T-cell (primary cell): ENCODE measurements at regions of chr6 and their contacts with region 1.

Region 1: DNA sequence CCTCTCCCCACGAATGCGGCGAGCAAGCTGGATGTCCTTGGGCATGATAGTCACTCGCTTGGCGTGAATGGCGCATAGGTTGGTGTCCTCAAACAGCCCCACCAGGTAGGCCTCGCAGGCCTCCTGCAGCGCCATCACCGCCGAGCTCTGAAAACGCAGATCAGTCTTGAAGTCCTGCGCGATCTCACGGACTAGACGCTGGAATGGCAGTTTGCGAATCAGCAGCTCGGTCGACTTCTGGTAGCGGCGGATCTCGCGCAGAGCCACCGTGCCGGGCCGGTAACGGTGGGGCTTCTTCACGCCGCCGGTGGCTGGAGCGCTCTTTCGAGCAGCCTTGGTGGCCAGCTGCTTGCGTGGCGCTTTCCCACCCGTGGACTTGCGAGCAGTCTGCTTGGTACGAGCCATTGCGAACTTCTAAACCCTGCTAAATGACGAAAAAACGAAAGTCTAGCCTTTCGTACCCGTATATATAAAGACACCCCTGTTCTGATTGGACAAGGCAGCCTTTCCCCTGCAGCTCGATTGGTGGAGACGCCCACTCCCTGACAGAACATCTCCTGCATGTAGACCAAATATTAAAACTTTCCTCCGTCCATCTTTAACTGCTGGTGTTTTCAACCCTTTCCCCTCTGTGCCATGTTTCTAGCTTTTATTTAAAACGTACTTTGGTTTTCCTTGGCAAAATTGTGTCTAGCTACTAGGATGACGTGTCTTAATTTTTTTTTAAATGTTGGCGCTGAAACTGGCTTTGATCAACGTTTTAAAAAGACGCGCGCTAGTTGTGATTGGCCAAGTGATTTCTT is 109.8 kb downstream of the HFE start:
- DNase-seq: peak; percentile 55 to 93 (median 81)
- ATAC-seq: peak; percentile 58 to 66 (median 61)
- H3K4me3 ChIP-seq: peak overlapping the region; percentile 79 to 99
- H3K4me3 Mint-ChIP-seq: peak overlapping the region; percentile 95 to 98 (median 97)
- H3K27ac ChIP-seq: peak overlapping the region; percentile 85
- H3K27ac Mint-ChIP-seq: peak overlapping the region; percentile 93 to 98
- H3K4me1 ChIP-seq: peaks cover 13 to 30% of the 10 kb centered on the region in 2 experiments
- H3K4me1 Mint-ChIP-seq: peaks cover 38 to 60% (median 46%) of the 10 kb centered on the region in 3 donors
- H3K27me3 ChIP-seq: no peaks in the 10 kb centered on the region
- H3K27me3 Mint-ChIP-seq: no peaks in the 10 kb centered on the region

Region 2: GRCh38 chr6:25746968-25747367 is 450.1 kb before region 1 on chr6:
- CTCF ChIA-PET with region 1: no interaction called
- POLR2A ChIA-PET with region 1: no interaction called
- DNase-seq: no peak
- ATAC-seq: no peak
- H3K4me3 ChIP-seq: no peak overlapping the region
- H3K4me3 Mint-ChIP-seq: no peak overlapping the region
- H3K27ac ChIP-seq: no peak overlapping the region
- H3K27ac Mint-ChIP-seq: no peak overlapping the region
- H3K4me1 ChIP-seq: no peaks in the 10 kb centered on the region
- H3K4me1 Mint-ChIP-seq: no peaks in the 10 kb centered on the region
- H3K27me3 ChIP-seq: no peaks in the 10 kb centered on the region
- H3K27me3 Mint-ChIP-seq: peaks cover 0 to 2% of the 10 kb centered on the region in 2 donors

Region 3: DNA sequence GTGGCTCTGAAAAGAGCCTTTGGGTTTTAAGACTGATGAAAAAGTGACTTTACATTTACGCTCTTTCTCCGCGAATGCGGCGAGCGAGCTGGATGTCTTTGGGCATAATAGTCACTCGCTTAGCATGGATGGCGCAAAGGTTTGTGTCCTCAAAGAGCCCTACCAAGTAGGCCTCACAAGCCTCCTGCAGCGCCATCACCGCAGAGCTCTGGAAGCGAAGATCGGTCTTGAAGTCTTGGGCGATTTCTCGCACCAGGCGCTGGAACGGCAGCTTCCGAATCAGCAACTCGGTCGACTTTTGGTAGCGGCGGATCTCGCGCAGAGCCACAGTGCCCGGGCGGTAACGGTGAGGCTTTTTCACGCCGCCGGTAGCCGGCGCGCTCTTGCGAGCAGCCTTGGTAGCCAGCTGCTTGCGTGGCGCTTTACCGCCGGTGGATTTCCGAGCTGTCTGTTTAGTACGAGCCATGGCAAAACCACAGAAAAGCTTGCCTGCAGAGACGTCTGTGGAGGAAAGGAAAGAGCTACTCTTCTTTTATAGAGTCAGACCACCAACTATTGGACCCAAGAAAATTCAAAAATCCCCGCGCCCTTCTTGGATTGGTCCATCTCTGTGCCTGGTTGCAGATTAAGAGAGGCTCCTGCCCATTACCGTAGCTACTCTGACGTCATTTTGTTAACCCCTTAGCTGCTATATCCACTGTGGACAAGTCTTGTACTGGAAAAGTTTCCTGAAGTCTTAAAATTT is 165.3 kb before region 1 on chr6:
- CTCF ChIA-PET with region 1: interaction called in 1 of 2 experiments, 4 read pairs
- POLR2A ChIA-PET with region 1: interaction called in 1 of 2 experiments, 26 read pairs
- DNase-seq: peak; percentile 61 to 95 (median 87)
- ATAC-seq: peak; percentile 68 to 72 (median 70)
- H3K4me3 ChIP-seq: peak overlapping the region; percentile 61 to 84
- H3K4me3 Mint-ChIP-seq: peak overlapping the region; percentile 90 to 95 (median 92)
- H3K27ac ChIP-seq: peak overlapping the region; percentile 74
- H3K27ac Mint-ChIP-seq: peak overlapping the region; percentile 94 to 98
- H3K4me1 ChIP-seq: peaks cover 30 to 32% of the 10 kb centered on the region in 2 experiments
- H3K4me1 Mint-ChIP-seq: peaks cover 48 to 53% (median 50%) of the 10 kb centered on the region in 3 donors
- H3K27me3 ChIP-seq: no peaks in the 10 kb centered on the region
- H3K27me3 Mint-ChIP-seq: peaks cover 0 to 2% of the 10 kb centered on the region in 2 donors

Region 4: DNA sequence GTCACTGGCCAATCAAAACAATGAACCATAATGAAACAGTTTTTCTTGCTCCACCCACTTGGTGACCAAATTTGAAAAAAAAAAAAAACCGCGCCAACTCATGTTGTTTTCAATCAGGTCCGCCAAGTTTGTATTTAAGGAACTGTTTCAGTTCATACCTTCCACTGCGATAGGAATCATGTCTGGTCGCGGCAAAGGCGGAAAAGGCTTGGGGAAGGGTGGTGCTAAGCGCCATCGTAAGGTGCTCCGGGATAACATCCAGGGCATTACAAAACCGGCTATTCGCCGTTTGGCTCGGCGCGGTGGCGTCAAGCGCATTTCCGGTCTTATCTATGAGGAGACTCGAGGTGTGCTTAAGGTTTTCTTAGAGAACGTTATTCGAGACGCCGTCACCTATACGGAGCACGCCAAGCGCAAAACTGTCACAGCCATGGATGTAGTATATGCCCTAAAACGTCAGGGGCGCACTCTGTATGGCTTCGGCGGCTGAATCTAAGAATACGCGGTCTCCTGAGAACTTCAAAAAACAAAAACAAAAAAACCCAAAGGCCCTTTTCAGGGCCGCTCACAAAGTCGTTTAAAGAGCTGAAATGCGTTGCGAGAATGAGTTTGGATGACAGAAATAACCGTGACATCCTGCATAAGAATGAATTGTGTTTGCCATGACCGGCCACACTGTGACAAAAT is 93.1 kb before region 1 on chr6:
- CTCF ChIA-PET with region 1: interaction called in 1 of 2 experiments, 9 read pairs
- POLR2A ChIA-PET with region 1: interaction called, 5 to 15 read pairs
- DNase-seq: peak; percentile 82 to 95 (median 89)
- ATAC-seq: peak; percentile 87 to 92 (median 90)
- H3K4me3 ChIP-seq: peak overlapping the region; percentile 40 to 68
- H3K4me3 Mint-ChIP-seq: peak overlapping the region; percentile 78 to 91 (median 89)
- H3K27ac ChIP-seq: peak overlapping the region; percentile 85
- H3K27ac Mint-ChIP-seq: peak overlapping the region; percentile 96 to 99
- H3K4me1 ChIP-seq: peaks cover 7 to 12% of the 10 kb centered on the region in 2 experiments
- H3K4me1 Mint-ChIP-seq: peaks cover 15 to 18% (median 16%) of the 10 kb centered on the region in 3 donors
- H3K27me3 ChIP-seq: peaks cover 0 to 4% of the 10 kb centered on the region in 2 experiments
- H3K27me3 Mint-ChIP-seq: peaks cover 0 to 3% of the 10 kb centered on the region in 2 donors

Region 5: GRCh38 chr6:26223650-26224546 is 26.9 kb after region 1 on chr6:
- CTCF ChIA-PET with region 1: interaction called, 3 to 4 read pairs
- POLR2A ChIA-PET with region 1: interaction called, 11 to 36 read pairs
- DNase-seq: peak in 34 of 35 experiments; percentile 36 to 84 (median 58)
- ATAC-seq: peak; percentile 87 to 90 (median 89)
- H3K4me3 ChIP-seq: peak overlapping the region; percentile 58 to 92
- H3K4me3 Mint-ChIP-seq: no peak overlapping the region
- H3K27ac ChIP-seq: peak overlapping the region; percentile 95
- H3K27ac Mint-ChIP-seq: no peak overlapping the region
- H3K4me1 ChIP-seq: peaks cover 10 to 13% of the 10 kb centered on the region in 2 experiments
- H3K4me1 Mint-ChIP-seq: peaks cover 5 to 14% (median 14%) of the 10 kb centered on the region in 3 donors
- H3K27me3 ChIP-seq: no peaks in the 10 kb centered on the region
- H3K27me3 Mint-ChIP-seq: no peaks in the 10 kb centered on the region

Region 6: DNA sequence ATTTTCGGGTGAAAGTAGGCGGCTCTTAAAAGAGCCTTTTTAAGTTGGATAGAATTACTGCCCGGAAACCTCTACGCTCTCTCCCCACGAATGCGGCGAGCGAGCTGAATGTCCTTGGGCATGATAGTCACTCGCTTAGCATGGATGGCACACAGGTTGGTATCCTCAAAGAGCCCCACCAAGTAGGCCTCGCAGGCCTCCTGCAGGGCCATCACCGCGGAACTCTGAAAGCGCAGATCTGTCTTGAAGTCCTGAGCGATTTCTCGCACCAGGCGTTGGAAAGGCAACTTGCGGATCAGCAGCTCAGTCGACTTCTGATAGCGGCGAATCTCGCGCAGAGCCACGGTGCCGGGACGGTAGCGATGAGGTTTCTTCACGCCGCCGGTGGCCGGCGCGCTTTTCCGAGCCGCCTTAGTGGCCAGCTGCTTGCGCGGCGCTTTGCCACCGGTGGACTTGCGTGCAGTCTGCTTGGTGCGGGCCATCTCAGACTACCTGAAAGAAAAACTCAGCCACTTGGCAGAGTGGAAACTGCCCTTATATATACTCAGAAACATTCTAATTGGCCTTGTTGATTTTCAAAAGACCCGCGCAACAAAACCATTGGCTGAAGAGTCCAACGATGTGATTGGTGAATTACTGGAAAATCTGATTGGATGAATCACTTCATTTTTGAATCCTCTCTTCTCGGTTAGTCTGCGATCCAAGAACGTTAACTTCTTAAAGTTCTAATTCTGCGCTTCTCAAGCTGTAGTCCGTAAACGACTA is 74.0 kb after region 1 on chr6:
- CTCF ChIA-PET with region 1: interaction called in 1 of 2 experiments, 9 read pairs
- POLR2A ChIA-PET with region 1: interaction called, 13 to 71 read pairs
- DNase-seq: peak; percentile 49 to 90 (median 74)
- ATAC-seq: peak; percentile 20 to 35 (median 32)
- H3K4me3 ChIP-seq: peak overlapping the region; percentile 71 to 83
- H3K4me3 Mint-ChIP-seq: no peak overlapping the region
- H3K27ac ChIP-seq: peak overlapping the region; percentile 89
- H3K27ac Mint-ChIP-seq: peak overlapping the region in 1 of 2 donors; percentile 58
- H3K4me1 ChIP-seq: peaks cover 18 to 31% of the 10 kb centered on the region in 2 experiments
- H3K4me1 Mint-ChIP-seq: peaks cover 20 to 29% (median 21%) of the 10 kb centered on the region in 3 donors
- H3K27me3 ChIP-seq: no peaks in the 10 kb centered on the region
- H3K27me3 Mint-ChIP-seq: no peaks in the 10 kb centered on the region

Region 7: DNA sequence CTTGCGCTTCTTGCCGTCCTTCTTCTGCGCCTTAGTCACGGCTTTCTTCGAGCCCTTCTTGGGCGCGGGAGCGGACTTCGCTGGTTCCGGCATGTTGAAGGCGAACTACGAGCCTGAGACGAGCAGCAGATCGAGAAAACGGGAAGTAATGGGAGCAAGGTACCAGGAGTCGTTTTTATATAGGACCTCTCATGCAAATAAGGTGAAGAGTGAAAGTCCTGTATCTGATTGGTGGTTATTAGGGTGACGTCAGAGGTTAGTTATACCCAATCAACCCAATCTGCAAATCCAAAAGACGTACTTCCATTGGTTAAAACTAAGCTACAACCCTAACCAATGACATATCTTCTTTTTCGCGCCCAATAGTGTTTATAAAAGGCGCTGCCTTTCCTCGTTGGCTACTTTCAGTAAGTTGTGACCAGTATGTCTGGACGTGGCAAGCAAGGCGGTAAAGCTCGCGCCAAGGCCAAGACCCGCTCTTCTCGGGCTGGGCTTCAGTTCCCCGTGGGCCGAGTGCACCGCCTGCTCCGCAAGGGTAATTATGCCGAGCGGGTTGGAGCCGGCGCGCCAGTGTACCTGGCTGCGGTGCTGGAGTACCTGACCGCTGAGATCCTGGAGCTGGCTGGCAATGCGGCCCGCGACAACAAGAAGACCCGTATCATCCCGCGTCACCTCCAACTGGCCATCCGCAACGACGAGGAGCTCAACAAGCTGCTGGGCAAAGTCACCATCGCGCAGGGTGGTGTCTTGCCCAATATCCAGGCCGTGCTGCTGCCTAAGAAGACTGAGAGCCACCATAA is 949.9 kb after region 1 on chr6:
- CTCF ChIA-PET with region 1: interaction called in 1 of 2 experiments, 7 read pairs
- POLR2A ChIA-PET with region 1: interaction called, 9 to 18 read pairs
- DNase-seq: peak; percentile 43 to 96 (median 69)
- ATAC-seq: peak; percentile 85 to 88 (median 86)
- H3K4me3 ChIP-seq: peak overlapping the region; percentile 77 to 93
- H3K4me3 Mint-ChIP-seq: no peak overlapping the region
- H3K27ac ChIP-seq: peak overlapping the region; percentile 91
- H3K27ac Mint-ChIP-seq: no peak overlapping the region
- H3K4me1 ChIP-seq: peaks cover 11 to 29% of the 10 kb centered on the region in 2 experiments
- H3K4me1 Mint-ChIP-seq: peaks cover 13 to 20% (median 18%) of the 10 kb centered on the region in 3 donors
- H3K27me3 ChIP-seq: no peaks in the 10 kb centered on the region
- H3K27me3 Mint-ChIP-seq: no peaks in the 10 kb centered on the region